ENCODE measurements at regions of chr16 and their contacts with region 1.

Region 1: GRCh38 chr16:68229431-68230198 is 6.3 kb downstream of the ESRP2 start:
- DNase-seq: peak; percentile 55 to 58
- ATAC-seq: peak; percentile 20 to 49; a peak in 4 of 6 replicates
- H3K4me3 ChIP-seq: no peak overlapping the region
- H3K27ac ChIP-seq: no peak overlapping the region
- H3K4me1 ChIP-seq: peaks cover 8% of the 10 kb centered on the region; the same call in 2 of the 3 replicates
- CTCF ChIP-seq: peak; percentile 88
- EP300 ChIP-seq: no peak
- POLR2A ChIP-seq: no peak
- RAD21 ChIP-seq: peak; percentile 89 to 91

Region 2: DNA sequence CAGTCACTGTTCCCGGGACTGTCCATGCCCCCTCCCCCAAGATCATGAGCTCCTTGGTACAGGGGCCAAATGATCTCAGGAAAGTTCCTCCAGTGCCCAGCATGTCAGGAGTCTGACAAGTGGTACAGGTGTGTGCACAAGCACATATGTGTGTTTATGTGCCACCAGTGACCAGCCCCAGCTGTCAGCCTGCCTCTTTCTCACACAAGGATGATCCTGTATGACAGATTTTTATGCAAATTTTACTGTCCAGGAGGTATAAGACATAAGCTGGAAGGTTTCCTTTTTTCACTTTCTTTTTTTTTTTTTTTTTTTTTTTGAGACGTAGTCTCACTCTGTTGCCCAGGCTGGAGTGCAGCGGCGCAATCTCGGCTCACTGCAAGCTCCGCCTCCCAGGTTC is 479.1 kb before region 1 on chr16:
- CTCF ChIA-PET with region 1: no interaction called
- POLR2A ChIA-PET with region 1: no interaction called
- DNase-seq: no peak
- ATAC-seq: no peak
- H3K4me3 ChIP-seq: no peak overlapping the region
- H3K27ac ChIP-seq: no peak overlapping the region
- H3K4me1 ChIP-seq: no peaks in the 10 kb centered on the region
- CTCF ChIP-seq: no peak
- EP300 ChIP-seq: no peak
- POLR2A ChIP-seq: no peak
- RAD21 ChIP-seq: no peak

Region 3: DNA sequence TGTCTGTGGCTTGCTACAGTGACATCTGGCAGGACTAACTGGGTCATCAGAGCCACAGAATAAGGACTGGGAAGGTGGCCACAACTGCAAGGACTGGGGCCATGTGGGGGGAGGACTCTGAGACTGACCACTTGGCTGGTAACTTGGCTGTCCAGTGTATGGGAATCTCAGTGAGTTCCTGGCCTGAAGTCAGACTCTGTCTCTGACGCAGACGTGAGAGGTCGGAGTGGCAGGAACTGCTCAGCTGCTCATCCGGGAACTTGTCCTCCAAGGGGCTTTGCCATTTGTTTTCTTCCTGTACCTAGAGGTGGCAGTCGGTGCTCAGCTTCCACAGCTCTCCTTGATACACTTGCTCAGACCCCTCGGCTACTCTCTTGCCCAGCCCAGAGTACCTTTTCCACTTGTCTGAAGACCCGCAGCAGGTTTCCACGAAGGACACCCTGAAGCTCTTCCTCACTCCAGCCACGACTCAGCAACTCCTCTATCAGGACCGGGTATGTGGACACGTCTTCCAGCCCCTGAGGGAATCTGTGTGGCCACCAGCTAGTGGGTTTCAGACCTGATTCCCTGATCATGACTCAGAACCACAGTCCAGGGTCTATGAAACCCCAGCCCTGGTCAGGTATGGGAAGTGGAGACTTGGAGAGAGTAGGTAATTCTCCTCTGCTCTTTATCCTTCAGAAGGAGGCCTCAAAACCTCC is 242.0 kb before region 1 on chr16:
- CTCF ChIA-PET with region 1: interaction called, 20 read pairs
- POLR2A ChIA-PET with region 1: no interaction called
- DNase-seq: no peak
- ATAC-seq: no peak
- H3K4me3 ChIP-seq: no peak overlapping the region
- H3K27ac ChIP-seq: no peak overlapping the region
- H3K4me1 ChIP-seq: peaks cover 7% of the 10 kb centered on the region; the same call in 2 of the 3 replicates
- CTCF ChIP-seq: no peak
- EP300 ChIP-seq: no peak
- POLR2A ChIP-seq: no peak
- RAD21 ChIP-seq: no peak

Region 4: GRCh38 chr16:68085259-68086071 is 144.2 kb before region 1 on chr16 and contains the start of gene NFATC3:
- CTCF ChIA-PET with region 1: interaction called, 10 read pairs
- POLR2A ChIA-PET with region 1: interaction called, 4 read pairs
- DNase-seq: peak; percentile 34 to 97
- ATAC-seq: peak; percentile 75 to 84
- H3K4me3 ChIP-seq: peak within 1 kb of the TSS; percentile 96
- H3K27ac ChIP-seq: peak within 1 kb of the TSS; percentile 94 to 95
- H3K4me1 ChIP-seq: peaks cover 34% of the 10 kb centered on the region
- CTCF ChIP-seq: no peak
- EP300 ChIP-seq: no peak
- POLR2A ChIP-seq: peak; percentile 73
- RAD21 ChIP-seq: no peak
- polyA plus RNA-seq, gene NFATC3: 23.9 and 32.4 TPM in 2 replicates

Region 5: DNA sequence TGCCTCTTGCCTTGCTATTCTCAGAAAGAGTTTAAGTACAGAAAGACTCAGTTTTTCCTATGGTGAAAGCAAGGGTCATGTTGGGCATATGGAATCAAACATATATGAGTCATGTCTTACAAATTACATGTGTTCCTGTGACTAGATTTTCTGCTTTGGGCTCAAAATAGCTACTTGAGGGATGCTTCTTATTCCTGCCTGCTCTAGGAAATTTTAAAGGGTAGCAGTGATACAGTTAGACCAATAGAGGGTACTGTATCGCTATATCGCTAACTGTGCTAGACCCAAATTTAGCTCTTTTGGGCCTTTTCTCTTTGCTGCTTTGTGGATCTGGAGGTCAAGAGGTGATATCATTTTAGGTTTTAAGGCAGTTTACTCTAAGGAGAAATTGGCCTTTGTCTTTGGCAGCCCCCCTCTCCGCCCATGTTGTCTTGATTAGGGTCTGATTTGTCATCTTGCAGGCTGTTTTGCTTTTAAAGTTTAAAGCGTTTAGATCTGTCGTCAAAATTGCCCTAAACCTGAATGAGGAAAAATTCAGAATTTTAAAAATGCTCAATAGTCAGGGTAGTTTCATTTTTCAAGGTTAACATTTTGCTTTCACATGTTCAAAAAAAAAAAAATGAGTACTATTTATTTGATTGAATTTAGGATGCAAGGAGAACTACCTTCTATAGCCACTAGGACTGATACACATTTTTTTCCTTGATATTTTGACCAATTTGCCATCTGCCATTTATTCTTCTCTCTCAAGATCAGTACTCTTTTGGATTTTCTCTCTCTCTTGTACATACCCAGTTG is 135.6 kb before region 1 on chr16:
- CTCF ChIA-PET with region 1: interaction called, 26 read pairs
- POLR2A ChIA-PET with region 1: no interaction called
- DNase-seq: peak in 1 of 2 experiments; percentile 34
- ATAC-seq: peak; percentile 90 to 92
- H3K4me3 ChIP-seq: no peak overlapping the region
- H3K27ac ChIP-seq: no peak overlapping the region
- H3K4me1 ChIP-seq: peaks cover 46% of the 10 kb centered on the region
- CTCF ChIP-seq: peak; percentile 57
- EP300 ChIP-seq: no peak
- POLR2A ChIP-seq: no peak
- RAD21 ChIP-seq: peak; percentile 61 to 69; a peak in 4 of 5 replicates

Region 6: GRCh38 chr16:68197250-68197649 is 32.4 kb before region 1 on chr16:
- CTCF ChIA-PET with region 1: interaction called, 12 read pairs
- POLR2A ChIA-PET with region 1: no interaction called
- DNase-seq: peak in 1 of 2 experiments; percentile 29
- ATAC-seq: peak; percentile 39 to 64; a peak in 3 of 6 replicates
- H3K4me3 ChIP-seq: no peak overlapping the region
- H3K27ac ChIP-seq: no peak overlapping the region
- H3K4me1 ChIP-seq: peaks cover 17% of the 10 kb centered on the region
- CTCF ChIP-seq: no peak
- EP300 ChIP-seq: no peak
- POLR2A ChIP-seq: no peak
- RAD21 ChIP-seq: no peak

Measured in A549 (cell line).